AG04450 (cell line): ENCODE measurements at regions of chr2 and their contacts with region 1.

Region 1: DNA sequence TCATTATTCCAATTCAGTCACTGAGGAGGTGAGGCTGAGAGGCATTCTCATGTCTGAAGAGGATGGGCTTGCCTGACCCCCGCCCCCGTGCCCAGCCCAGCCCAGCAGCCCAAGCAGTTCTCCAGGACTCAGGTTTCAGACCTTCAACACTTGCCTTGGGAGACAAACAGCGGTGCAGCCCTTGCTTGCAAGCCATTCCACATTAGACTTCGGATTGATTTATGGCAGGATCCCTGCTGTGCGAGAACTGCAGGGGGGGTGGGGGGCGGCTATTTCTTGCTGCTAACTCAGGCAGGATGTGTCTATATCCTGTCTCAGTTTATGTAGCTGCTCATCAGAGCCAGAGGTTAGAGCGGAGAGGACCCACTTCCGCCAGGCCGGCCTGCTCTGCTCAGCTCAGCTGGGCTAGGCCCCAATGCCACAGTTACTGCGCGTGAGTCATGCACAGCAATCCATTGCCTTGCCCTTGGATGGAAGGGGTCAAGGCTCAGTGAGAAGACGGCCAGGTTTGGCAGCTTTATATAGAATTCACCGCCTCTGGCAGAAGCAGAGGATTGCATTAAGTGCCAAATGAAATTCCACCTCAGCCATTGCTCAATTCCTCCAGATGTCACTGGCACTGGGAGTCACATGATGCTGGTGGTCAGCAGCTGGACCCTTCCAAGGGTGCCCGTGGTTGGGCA is 1.8 kb downstream of the GYPC start:
- DNase-seq: peak; percentile 98
- H3K4me3 ChIP-seq: peak overlapping the region; percentile 88
- H3K27ac ChIP-seq: peak overlapping the region; percentile 100
- H3K27me3 ChIP-seq: no peaks in the 10 kb centered on the region
- CTCF ChIP-seq: no peak

Region 2: GRCh38 chr2:126614524-126615227 is 43.1 kb before region 1 on chr2:
- CTCF ChIA-PET with region 1: no interaction called
- POLR2A ChIA-PET with region 1: no interaction called
- DNase-seq: no peak
- H3K4me3 ChIP-seq: no peak overlapping the region
- H3K27ac ChIP-seq: no peak overlapping the region
- H3K27me3 ChIP-seq: no peaks in the 10 kb centered on the region
- CTCF ChIP-seq: no peak

Region 3: GRCh38 chr2:126634273-126634861 is 23.4 kb before region 1 on chr2:
- CTCF ChIA-PET with region 1: no interaction called
- POLR2A ChIA-PET with region 1: no interaction called
- DNase-seq: no peak
- H3K4me3 ChIP-seq: no peak overlapping the region
- H3K27ac ChIP-seq: no peak overlapping the region
- H3K27me3 ChIP-seq: peaks cover 14% of the 10 kb centered on the region
- CTCF ChIP-seq: peak; percentile 59

Region 4: GRCh38 chr2:126704434-126705160 is 46.8 kb after region 1 on chr2:
- CTCF ChIA-PET with region 1: no interaction called
- POLR2A ChIA-PET with region 1: interaction called, 13 read pairs
- DNase-seq: peak; percentile 27
- H3K4me3 ChIP-seq: no peak overlapping the region
- H3K27ac ChIP-seq: no peak overlapping the region
- H3K27me3 ChIP-seq: no peaks in the 10 kb centered on the region
- CTCF ChIP-seq: no peak

Region 5: DNA sequence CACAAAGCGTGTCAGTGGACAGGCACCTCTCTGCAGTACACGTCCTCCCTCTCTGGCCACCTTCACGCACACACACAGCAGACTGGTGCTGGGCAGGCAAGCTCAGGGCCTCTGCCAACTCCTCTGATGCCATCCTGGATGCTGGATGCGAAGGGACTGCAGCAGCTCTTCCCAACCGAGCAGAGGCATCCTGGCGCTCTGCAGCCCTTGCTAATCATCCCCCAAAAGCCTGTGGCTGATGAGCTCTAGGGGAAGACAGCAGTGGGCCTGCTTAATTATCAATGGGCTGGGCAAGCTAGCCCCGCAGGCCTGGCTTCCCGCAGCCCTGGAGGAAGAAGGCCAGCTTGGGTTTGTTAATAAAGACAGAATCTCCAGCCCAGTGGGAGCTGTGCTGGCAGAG is 169.6 kb after region 1 on chr2:
- CTCF ChIA-PET with region 1: no interaction called
- POLR2A ChIA-PET with region 1: no interaction called
- DNase-seq: no peak
- H3K4me3 ChIP-seq: no peak overlapping the region
- H3K27ac ChIP-seq: no peak overlapping the region
- H3K27me3 ChIP-seq: no peaks in the 10 kb centered on the region
- CTCF ChIP-seq: no peak